ENCODE measurements at regions of chr9 and their contacts with region 1.

Region 1: GRCh38 chr9:105712773-105713172 is 18.4 kb downstream of the TMEM38B start:
- DNase-seq: no peak
- ATAC-seq: no peak
- H3K4me3 Mint-ChIP-seq: no peak overlapping the region
- H3K27ac Mint-ChIP-seq: no peak overlapping the region
- H3K4me1 Mint-ChIP-seq: peaks cover 5% of the 10 kb centered on the region
- H3K27me3 Mint-ChIP-seq: no peaks in the 10 kb centered on the region

Region 2: GRCh38 chr9:105608721-105609598 is 103.8 kb before region 1 on chr9:
- CTCF ChIA-PET with region 1: interaction called, 13 read pairs
- DNase-seq: no peak
- ATAC-seq: peak; percentile 66
- H3K4me3 Mint-ChIP-seq: no peak overlapping the region
- H3K27ac Mint-ChIP-seq: no peak overlapping the region
- H3K4me1 Mint-ChIP-seq: no peaks in the 10 kb centered on the region
- H3K27me3 Mint-ChIP-seq: no peaks in the 10 kb centered on the region

Region 3: GRCh38 chr9:105647595-105648349 is 65.0 kb before region 1 on chr9:
- CTCF ChIA-PET with region 1: no interaction called
- DNase-seq: no peak
- ATAC-seq: no peak
- H3K4me3 Mint-ChIP-seq: no peak overlapping the region
- H3K27ac Mint-ChIP-seq: no peak overlapping the region
- H3K4me1 Mint-ChIP-seq: no peaks in the 10 kb centered on the region
- H3K27me3 Mint-ChIP-seq: peaks cover 1% of the 10 kb centered on the region

Region 4: GRCh38 chr9:105681724-105682123 is 31.0 kb before region 1 on chr9:
- CTCF ChIA-PET with region 1: no interaction called
- DNase-seq: no peak
- ATAC-seq: no peak
- H3K4me3 Mint-ChIP-seq: no peak overlapping the region
- H3K27ac Mint-ChIP-seq: no peak overlapping the region
- H3K4me1 Mint-ChIP-seq: no peaks in the 10 kb centered on the region
- H3K27me3 Mint-ChIP-seq: peaks cover 4% of the 10 kb centered on the region

Region 5: DNA sequence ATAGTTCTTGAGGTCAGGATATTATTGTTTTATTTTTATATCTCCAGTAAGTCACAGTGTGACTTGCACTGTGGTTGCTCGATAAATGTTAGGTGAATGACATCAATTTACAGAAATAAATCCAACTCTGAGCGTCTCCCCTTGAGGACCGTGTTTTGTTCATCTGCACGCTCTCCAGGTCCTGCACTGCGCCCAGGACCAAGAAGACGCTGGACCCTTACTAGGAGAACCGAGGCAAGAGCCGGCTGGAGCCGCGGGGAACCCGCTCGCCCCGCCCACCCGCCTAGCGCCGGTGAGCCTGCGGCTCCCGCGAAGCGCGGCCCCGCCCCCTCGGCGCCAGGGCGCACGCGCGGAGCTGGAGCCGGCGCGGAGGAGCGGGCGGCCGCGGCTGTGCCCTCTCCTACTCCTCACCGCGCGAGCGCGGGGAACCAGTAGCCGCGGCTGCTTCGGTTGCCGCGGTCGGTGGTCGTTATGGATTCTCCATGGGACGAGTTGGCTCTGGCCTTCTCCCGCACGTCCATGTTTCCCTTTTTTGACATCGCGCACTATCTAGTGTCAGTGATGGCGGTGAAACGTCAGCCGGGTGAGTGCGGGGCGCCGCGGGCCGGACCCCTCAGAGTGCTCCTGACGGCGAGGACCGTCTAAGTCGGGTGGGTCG is 18.5 kb before region 1 on chr9 and contains the start of gene TMEM38B:
- CTCF ChIA-PET with region 1: interaction called, 14 read pairs
- DNase-seq: peak; percentile 84
- ATAC-seq: peak; percentile 92
- H3K4me3 Mint-ChIP-seq: peak within 1 kb of the TSS; percentile 84
- H3K27ac Mint-ChIP-seq: peak within 1 kb of the TSS; percentile 71
- H3K4me1 Mint-ChIP-seq: peaks cover 15% of the 10 kb centered on the region
- H3K27me3 Mint-ChIP-seq: peaks cover 26% of the 10 kb centered on the region
- total RNA-seq, gene TMEM38B: 9.9 to 17.9 TPM

Region 6: DNA sequence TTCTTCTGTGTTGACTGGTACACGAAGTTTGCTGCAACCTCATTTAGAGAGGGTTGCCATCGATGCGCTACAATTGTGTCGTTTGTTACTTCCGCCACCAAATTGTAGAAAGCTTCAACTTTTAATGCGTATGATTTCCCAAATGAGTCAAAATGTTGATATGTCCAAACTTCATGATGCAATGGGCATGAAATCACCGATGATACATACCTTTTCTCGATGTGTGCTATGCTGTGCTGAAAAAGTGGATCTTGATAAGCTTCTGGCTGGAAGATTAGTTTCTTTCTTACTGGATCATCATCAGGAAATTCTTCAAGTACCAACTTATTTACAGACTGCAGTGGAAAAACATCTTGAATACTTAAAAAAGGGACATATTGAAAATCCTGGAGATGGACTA is 47.3 kb after region 1 on chr9:
- CTCF ChIA-PET with region 1: no interaction called
- DNase-seq: no peak
- ATAC-seq: no peak
- H3K4me3 Mint-ChIP-seq: no peak overlapping the region
- H3K27ac Mint-ChIP-seq: no peak overlapping the region
- H3K4me1 Mint-ChIP-seq: peaks cover 3% of the 10 kb centered on the region
- H3K27me3 Mint-ChIP-seq: no peaks in the 10 kb centered on the region

Measured in activated CD8-positive, alpha-beta memory T cell treated with anti-CD3 and anti-CD28 coated beads, Interleukin-2, amount 10 ng/mL, durations not matched to agents 7 days and 5 days (primary cell).